ENCODE measurements at regions of chr16 and their contacts with region 1.

Region 1: DNA sequence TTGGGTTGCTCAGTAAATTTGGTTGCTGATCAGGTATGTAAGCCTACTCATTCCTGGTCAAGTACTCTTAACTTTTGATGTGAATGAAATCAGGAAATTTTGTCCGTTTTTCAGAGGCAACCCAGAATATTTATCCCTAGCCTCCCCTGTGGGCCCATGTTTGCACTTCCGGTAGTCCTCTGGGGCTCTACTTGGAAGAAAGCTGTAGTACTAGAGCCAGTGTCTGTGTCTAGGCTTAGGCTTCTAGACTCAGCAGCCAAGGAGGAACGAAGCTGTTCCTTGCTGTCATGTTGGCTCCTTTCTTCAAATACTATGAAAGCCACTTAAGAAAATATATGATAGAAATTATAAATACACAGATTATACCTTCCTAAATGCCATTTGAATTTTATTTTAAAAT is 21.2 kb downstream of the ESRP2 start:
- DNase-seq: no peak
- H3K4me3 ChIP-seq: no peak overlapping the region
- H3K27ac ChIP-seq: no peak overlapping the region
- H3K4me1 ChIP-seq: no peaks in the 10 kb centered on the region
- H3K27me3 ChIP-seq: no peaks in the 10 kb centered on the region
- CTCF ChIP-seq: no peak
- POLR2A ChIP-seq: no peak

Region 2: GRCh38 chr16:68113059-68113761 is 101.5 kb before region 1 on chr16:
- CTCF ChIA-PET with region 1: no interaction called
- POLR2A ChIA-PET with region 1: no interaction called
- dilution Hi-C with region 1: no loop called
- intact Hi-C with region 1: loop called (anchors 5 kb)
- DNase-seq: no peak
- H3K4me3 ChIP-seq: no peak overlapping the region
- H3K27ac ChIP-seq: no peak overlapping the region
- H3K4me1 ChIP-seq: no peaks in the 10 kb centered on the region
- H3K27me3 ChIP-seq: no peaks in the 10 kb centered on the region
- CTCF ChIP-seq: no peak
- POLR2A ChIP-seq: no peak

Region 3: GRCh38 chr16:68190736-68191510 is 23.8 kb before region 1 on chr16:
- CTCF ChIA-PET with region 1: no interaction called
- POLR2A ChIA-PET with region 1: no interaction called
- dilution Hi-C with region 1: no loop called
- intact Hi-C with region 1: no loop called
- DNase-seq: no peak
- H3K4me3 ChIP-seq: no peak overlapping the region
- H3K27ac ChIP-seq: no peak overlapping the region
- H3K4me1 ChIP-seq: no peaks in the 10 kb centered on the region
- H3K27me3 ChIP-seq: no peaks in the 10 kb centered on the region
- CTCF ChIP-seq: no peak
- POLR2A ChIP-seq: no peak

Measured in endothelial cell of umbilical vein (primary cell).